MCF 10A (cell line): ENCODE measurements at regions of chr1 and their contacts with region 1.

Region 1: GRCh38 chr1:167687919-167688519 is 33.8 kb upstream of the MPZL1 start:
- DNase-seq: peak; percentile 93
- H3K4me3 Mint-ChIP-seq: no peak overlapping the region
- H3K27ac Mint-ChIP-seq: no peak overlapping the region
- H3K4me1 Mint-ChIP-seq: peaks cover 26% of the 10 kb centered on the region
- H3K27me3 Mint-ChIP-seq: no peaks in the 10 kb centered on the region
- CTCF ChIP-seq: peak; percentile 97

Region 2: DNA sequence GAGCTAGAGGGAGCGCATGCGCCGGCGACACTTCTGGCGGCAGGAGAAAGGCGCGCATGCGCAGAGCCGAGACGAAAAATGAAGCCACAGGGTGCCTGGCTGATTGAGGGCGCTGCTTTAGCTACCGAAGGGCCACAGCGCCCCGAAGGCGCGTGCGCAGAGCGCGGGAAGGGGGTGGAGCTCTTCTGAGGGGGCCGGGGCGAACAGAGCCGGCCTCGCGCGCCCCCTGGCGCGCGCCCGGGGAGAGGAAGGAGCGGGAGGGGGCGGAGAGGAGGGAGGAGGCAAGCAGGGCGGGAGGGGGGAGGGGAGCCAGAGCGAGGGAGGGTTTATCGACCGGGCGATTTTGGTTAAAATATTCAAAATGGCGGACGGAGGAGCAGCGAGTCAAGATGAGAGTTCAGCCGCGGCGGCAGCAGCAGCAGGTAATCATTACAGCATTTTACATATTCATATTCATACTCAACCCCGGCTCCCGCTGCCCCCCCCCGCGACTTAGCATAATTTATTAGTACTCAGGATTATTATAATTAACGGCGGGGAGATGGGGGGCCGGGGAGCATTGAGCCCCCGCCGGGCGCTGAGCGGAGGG is 467.4 kb before region 1 on chr1 and contains the start of gene POU2F1:
- CTCF ChIA-PET with region 1: interaction called, 3 read pairs
- POLR2A ChIA-PET with region 1: interaction called, 3 read pairs
- intact Hi-C with region 1: loop called (anchors 5 kb)
- DNase-seq: peak; percentile 100
- H3K4me3 Mint-ChIP-seq: peak within 1 kb of the TSS; percentile 100
- H3K27ac Mint-ChIP-seq: peak within 1 kb of the TSS; percentile 100
- H3K4me1 Mint-ChIP-seq: peaks cover 34% of the 10 kb centered on the region
- H3K27me3 Mint-ChIP-seq: no peaks in the 10 kb centered on the region
- CTCF ChIP-seq: peak; percentile 60
- total RNA-seq, gene POU2F1: 11.6 and 16.7 TPM in 2 replicates

Region 3: DNA sequence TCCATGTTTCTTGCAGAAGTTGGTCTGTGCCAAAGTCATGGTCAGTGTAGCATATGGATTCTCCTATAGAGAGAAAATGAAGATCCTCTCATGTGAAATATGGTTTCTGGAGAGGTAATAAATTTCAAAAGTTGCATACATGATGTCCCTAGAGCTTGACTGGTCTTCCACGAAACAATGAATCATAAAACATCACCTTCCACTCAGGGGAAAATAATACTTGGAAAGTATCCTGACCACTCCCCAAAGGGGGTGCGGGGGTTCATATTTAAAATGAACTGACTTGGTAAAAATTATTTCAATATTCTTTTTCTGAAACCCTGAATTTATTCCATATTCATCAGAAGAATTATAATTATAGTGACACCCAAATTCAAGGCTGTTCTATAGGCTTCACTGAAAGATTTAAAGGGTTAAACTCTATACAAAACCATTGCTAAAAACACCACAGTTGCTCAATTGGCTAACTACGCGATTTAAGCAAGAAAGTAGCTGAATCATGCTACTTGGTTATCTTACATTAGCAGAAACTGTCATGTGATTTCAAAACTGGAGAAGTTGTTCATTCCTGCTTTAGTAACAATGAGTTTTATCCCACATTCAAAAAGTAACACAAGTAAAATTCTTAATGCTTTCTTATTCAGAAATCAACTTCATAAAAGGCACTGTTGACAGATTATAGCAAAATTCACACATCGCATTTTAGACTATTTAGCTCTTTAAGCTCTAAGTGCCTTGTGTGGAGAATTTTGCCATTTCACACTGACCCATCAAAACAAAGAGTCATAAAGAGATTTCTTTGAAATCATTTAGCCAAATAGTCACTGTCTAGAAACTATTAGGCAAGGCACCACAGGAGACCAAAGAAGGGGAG is 139.7 kb before region 1 on chr1:
- CTCF ChIA-PET with region 1: interaction called, 18 read pairs
- POLR2A ChIA-PET with region 1: interaction called, 10 read pairs
- intact Hi-C with region 1: no loop called
- DNase-seq: peak; percentile 86
- H3K4me3 Mint-ChIP-seq: peak overlapping the region; percentile 87
- H3K27ac Mint-ChIP-seq: peak overlapping the region; percentile 76
- H3K4me1 Mint-ChIP-seq: peaks cover 53% of the 10 kb centered on the region
- H3K27me3 Mint-ChIP-seq: no peaks in the 10 kb centered on the region
- CTCF ChIP-seq: no peak

Region 4: GRCh38 chr1:167584581-167584980 is 103.4 kb before region 1 on chr1:
- CTCF ChIA-PET with region 1: interaction called, 37 read pairs
- POLR2A ChIA-PET with region 1: no interaction called
- intact Hi-C with region 1: no loop called
- DNase-seq: no peak
- H3K4me3 Mint-ChIP-seq: no peak overlapping the region
- H3K27ac Mint-ChIP-seq: no peak overlapping the region
- H3K4me1 Mint-ChIP-seq: peaks cover 7% of the 10 kb centered on the region
- H3K27me3 Mint-ChIP-seq: no peaks in the 10 kb centered on the region
- CTCF ChIP-seq: no peak

Region 5: GRCh38 chr1:167617153-167618147 is 70.6 kb before region 1 on chr1:
- CTCF ChIA-PET with region 1: interaction called, 51 read pairs
- POLR2A ChIA-PET with region 1: no interaction called
- intact Hi-C with region 1: no loop called
- DNase-seq: no peak
- H3K4me3 Mint-ChIP-seq: peak overlapping the region; percentile 0
- H3K27ac Mint-ChIP-seq: peak overlapping the region; percentile 16
- H3K4me1 Mint-ChIP-seq: peaks cover 32% of the 10 kb centered on the region
- H3K27me3 Mint-ChIP-seq: no peaks in the 10 kb centered on the region
- CTCF ChIP-seq: no peak

Region 6: GRCh38 chr1:167669209-167670124 is 18.6 kb before region 1 on chr1:
- CTCF ChIA-PET with region 1: interaction called, 69 read pairs
- POLR2A ChIA-PET with region 1: interaction called, 27 read pairs
- intact Hi-C with region 1: no loop called
- DNase-seq: peak; percentile 45
- H3K4me3 Mint-ChIP-seq: no peak overlapping the region
- H3K27ac Mint-ChIP-seq: no peak overlapping the region
- H3K4me1 Mint-ChIP-seq: peaks cover 57% of the 10 kb centered on the region
- H3K27me3 Mint-ChIP-seq: no peaks in the 10 kb centered on the region
- CTCF ChIP-seq: no peak

Region 7: DNA sequence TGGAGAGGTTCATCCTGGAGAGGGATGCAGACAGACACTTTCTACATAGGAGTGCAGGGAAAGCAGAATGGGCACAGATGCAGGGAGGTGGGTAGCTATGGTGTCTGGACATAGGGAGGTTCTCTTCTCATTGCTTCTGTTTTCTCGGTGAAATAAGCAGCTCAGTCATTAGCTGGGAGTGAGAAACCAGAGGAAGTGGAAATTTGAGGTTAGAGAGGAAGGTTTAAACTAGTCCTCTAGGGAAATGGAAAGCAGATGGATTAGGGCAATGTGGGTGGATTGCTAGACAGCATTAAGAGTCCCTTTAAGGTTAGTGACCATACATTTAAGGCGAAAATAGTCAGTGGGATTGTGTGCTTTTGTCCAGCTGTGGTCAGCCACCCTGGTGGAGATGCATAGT is 73.4 kb after region 1 on chr1:
- CTCF ChIA-PET with region 1: no interaction called
- POLR2A ChIA-PET with region 1: no interaction called
- intact Hi-C with region 1: no loop called
- DNase-seq: no peak
- H3K4me3 Mint-ChIP-seq: no peak overlapping the region
- H3K27ac Mint-ChIP-seq: no peak overlapping the region
- H3K4me1 Mint-ChIP-seq: peaks cover 30% of the 10 kb centered on the region
- H3K27me3 Mint-ChIP-seq: no peaks in the 10 kb centered on the region
- CTCF ChIP-seq: no peak

Region 8: DNA sequence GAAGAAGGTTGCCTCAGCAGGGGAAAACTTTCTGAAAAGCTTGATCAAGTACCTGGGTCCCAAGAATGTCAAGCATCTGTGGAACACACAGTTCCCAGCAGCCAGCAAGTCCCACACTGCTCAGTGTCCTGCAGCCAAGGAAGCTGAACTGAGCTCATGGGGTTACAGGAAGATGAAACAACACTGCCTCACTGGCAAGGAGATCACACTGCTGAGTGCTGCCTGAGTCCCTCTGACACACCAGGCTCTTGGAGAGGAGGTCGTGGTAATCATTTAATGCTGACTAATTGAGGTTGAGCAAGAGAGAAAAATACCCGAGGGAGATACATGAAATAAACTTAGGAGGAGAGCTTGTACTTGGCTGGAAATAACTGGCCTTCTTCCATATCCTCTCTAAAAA is 109.0 kb after region 1 on chr1:
- CTCF ChIA-PET with region 1: interaction called, 13 read pairs
- POLR2A ChIA-PET with region 1: interaction called, 4 read pairs
- intact Hi-C with region 1: no loop called
- DNase-seq: peak; percentile 100
- H3K4me3 Mint-ChIP-seq: peak overlapping the region; percentile 57
- H3K27ac Mint-ChIP-seq: peak overlapping the region; percentile 83
- H3K4me1 Mint-ChIP-seq: peaks cover 63% of the 10 kb centered on the region
- H3K27me3 Mint-ChIP-seq: no peaks in the 10 kb centered on the region
- CTCF ChIP-seq: peak; percentile 12